ENCODE measurements at regions of chr17 and their contacts with region 1.

Region 1: DNA sequence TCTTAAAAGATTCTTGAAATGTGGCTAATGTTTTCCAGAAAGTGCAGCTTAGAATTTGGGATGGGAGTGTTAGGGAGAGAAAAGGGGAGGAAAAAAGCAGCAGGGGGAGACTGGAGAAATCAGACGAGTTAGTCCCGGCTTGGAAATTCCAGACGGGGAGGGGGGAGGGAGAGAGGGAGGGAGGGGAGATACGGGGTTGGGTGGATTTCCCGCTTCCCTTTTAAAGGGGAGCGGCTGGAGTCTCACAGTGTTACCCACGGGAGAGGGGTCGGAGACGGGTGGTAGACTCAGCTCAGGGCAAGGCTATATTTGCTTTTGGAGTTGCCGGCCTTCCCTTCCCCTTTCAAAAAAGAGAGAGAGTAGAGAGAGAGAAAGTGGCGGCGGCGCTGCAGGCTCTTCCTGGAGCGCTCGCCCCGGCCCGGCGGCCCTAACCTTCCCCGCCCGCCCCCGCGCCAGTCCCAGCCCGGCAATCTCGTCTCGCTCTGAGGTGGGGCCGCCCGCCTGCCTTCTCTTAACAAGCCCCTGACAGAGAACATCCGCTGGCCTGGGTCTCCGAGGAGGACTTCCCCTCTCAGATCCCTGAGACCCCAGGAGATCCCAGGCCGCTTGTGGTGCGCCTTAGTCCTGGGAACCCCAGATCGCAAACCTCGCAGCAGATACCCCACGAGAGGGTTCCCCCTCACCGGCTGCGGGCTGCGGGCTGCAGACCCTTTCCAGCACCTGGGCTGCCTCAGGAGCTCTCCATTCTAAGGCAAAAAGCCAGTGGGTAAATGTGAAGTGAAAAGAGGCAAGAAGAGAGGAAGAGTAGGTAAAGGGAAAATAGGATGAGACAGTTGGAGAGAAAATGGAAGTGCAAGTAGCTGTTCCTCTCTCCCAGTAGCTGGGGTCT is 6.7 kb downstream of the IGF2BP1 start:
- DNase-seq: no peak
- H3K4me3 ChIP-seq: no peak overlapping the region
- H3K27ac ChIP-seq: no peak overlapping the region
- H3K27me3 ChIP-seq: peaks cover 14 to 100% (median 96%) of the 10 kb centered on the region in 45 donors
- CTCF ChIP-seq: no peak

Region 2: DNA sequence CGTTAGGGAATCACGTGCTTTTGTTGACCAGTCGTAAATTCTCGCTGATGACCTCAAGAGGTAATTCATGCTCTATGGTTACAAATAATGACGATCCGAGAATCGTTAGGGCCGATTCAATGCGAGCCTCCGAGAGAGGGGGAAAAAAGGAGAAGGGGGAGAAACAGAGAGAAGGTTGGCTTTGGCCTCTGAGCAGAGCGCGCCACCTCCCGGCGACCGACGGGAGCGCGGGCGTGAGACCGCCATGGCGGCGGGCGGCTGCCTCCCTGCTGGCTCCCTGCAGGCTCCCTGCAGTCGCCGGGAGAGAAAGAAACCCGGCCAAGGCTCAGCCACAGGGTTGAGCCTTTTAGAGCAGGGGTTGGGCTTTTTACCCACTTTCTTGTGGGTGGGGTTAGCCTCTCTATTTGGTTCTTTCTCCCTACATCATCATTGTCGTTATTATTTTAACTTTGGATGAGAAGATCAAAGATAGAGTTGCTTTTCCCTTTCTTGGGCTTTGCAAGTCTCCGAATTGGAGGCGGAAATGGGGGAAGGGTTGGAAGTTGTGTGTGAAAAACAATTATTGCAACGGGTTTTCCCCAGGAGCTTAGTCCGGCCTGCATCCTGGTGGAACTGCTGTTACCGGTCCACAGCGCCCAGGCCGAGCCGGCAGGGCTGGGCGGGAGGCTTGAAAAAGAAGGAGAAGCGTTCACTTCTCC is 409.9 kb before region 1 on chr17:
- intact Hi-C with region 1: loop called in 1 of 2 experiments (anchors 10 kb)
- DNase-seq: no peak
- H3K4me3 ChIP-seq: no peak overlapping the region
- H3K27ac ChIP-seq: no peak overlapping the region
- H3K27me3 ChIP-seq: peaks cover 24 to 100% (median 99%) of the 10 kb centered on the region in 45 donors
- CTCF ChIP-seq: peak in 55 of 56 donors; percentile 18 to 65 (median 48)

Region 3: GRCh38 chr17:48933035-48933434 is 70.8 kb before region 1 on chr17:
- intact Hi-C with region 1: no loop called
- DNase-seq: no peak
- H3K4me3 ChIP-seq: no peak overlapping the region
- H3K27ac ChIP-seq: no peak overlapping the region
- H3K27me3 ChIP-seq: no peaks in the 10 kb centered on the region
- CTCF ChIP-seq: no peak

Measured in dorsolateral prefrontal cortex (tissue), 120 donors.